ENCODE measurements at regions of chr11 and their contacts with region 1.

Region 1: GRCh38 chr11:17207317-17208258 is at the start of gene PIK3C2A:
- DNase-seq: peak; percentile 92 to 99 (median 97)
- H3K4me3 ChIP-seq: peak within 1 kb of the TSS; percentile 71 to 100 (median 94)
- H3K27ac ChIP-seq: peak within 1 kb of the TSS; percentile 63 to 99 (median 93)
- H3K27me3 ChIP-seq: no peaks in the 10 kb centered on the region
- CTCF ChIP-seq: peak in 6 of 56 donors; percentile 3 to 18 (median 9)
- total RNA-seq, gene PIK3C2A: 48.9 to 110 (median 68.0) TPM

Region 2: GRCh38 chr11:16883174-16883573 is 324.4 kb before region 1 on chr11:
- intact Hi-C with region 1: no loop called
- DNase-seq: peak in 1 of 10 donors; percentile 31
- H3K4me3 ChIP-seq: no peak overlapping the region
- H3K27ac ChIP-seq: no peak overlapping the region
- H3K27me3 ChIP-seq: peaks cover 0 to 6% (median 0%) of the 10 kb centered on the region in 45 donors
- CTCF ChIP-seq: peak in 36 of 56 donors; percentile 17 to 67 (median 29)

Region 3: DNA sequence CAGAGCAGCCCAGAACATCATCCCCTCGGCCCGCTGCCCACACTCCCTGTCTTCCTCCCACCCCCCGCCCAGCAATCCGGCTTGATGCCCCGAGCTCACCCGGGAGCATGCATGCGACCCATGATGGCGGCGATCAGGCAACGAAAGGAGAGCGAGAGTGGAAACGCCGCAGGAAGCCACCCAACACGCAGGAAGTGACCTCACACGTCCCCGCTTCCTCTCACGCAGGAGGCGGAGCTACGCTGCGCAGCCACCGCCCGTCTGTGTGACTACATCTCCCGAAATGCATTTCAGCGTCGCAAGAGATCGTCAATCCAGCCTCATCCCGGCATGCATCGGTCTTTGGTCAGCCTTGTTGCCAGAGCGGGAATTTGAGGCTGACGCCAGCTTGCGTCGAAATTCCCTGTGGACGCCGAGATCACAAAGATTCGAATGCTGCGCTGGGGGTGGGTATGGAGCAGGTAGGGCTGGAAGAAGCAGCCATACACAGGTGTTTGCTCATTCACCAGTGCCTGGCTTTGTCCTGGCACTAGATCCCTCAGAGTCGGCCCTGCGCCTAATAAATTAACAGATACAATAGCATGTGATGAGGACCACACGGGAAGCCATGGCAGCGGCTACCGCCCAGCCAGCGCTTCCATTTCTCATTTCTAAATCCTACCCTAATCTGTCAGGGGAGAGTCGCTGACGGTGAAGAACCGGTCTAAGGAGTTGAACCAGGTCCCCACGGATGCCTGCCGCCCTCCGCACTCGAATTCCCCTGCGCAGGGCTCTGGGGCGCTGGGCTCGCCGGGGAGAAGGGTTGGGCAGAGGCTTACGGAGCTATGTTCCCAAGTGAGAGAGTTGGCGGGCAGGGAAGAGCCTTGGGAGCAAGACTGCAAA is 129.8 kb before region 1 on chr11 and contains the start of gene RPS13:
- intact Hi-C with region 1: loop called (anchors 1 to 5 kb)
- DNase-seq: peak; percentile 98 to 99 (median 99)
- H3K4me3 ChIP-seq: peak within 1 kb of the TSS; percentile 58 to 100 (median 96)
- H3K27ac ChIP-seq: peak within 1 kb of the TSS; percentile 42 to 96 (median 90)
- H3K27me3 ChIP-seq: no peaks in the 10 kb centered on the region
- CTCF ChIP-seq: peak in 27 of 56 donors; percentile 3 to 55 (median 23)
- total RNA-seq, gene RPS13: 204 to 383 (median 281) TPM

Region 4: DNA sequence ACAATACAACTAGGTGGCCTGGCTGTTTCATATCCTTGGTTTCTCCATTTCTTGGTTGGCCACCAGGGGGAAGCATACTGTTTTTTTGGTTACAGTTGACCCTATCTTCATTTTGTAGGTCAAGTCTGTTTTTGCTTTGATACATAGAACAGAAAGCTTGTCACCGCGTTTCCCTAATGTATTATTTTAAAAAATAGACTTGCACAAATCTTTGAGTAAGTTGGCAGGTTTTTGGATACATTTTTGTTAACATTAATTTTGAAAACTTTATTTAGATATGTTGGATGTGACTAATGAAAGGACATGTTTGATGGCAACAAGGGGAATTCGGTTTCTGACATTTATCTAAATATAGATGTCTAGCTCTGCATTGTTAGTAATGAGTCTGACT is 147.0 kb after region 1 on chr11:
- intact Hi-C with region 1: loop called in 1 of 2 experiments (anchors 10 kb)
- DNase-seq: peak in 4 of 10 donors; percentile 52 to 80 (median 66)
- H3K4me3 ChIP-seq: peak overlapping the region in 52 of 59 donors; percentile 1 to 85 (median 74)
- H3K27ac ChIP-seq: peak overlapping the region in 16 of 59 donors; percentile 1 to 91 (median 66)
- H3K27me3 ChIP-seq: no peaks in the 10 kb centered on the region
- CTCF ChIP-seq: peak; percentile 48 to 81 (median 71)

Region 5: DNA sequence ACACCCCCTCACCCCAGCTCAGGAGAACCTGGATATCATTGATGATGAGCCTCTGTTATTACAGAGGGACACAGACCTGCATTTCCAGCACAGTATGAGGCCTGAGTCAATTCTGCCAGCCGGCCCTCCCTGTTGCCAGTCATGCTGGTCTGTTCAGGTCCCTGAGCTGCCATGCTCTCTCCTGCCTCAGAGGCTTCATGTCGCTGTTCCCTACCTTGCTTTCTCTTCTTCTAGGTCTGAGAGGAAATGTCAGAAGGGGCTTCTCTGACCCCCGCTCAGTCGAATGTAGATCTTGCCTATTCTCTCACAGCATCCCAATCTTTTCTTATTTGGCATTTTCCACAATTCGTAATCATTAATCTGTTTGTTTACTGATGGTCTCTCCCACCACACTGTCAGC is 290.9 kb after region 1 on chr11:
- intact Hi-C with region 1: no loop called
- DNase-seq: peak in 1 of 10 donors; percentile 71
- H3K4me3 ChIP-seq: no peak overlapping the region
- H3K27ac ChIP-seq: peak overlapping the region in 1 of 59 donors; percentile 21
- H3K27me3 ChIP-seq: no peaks in the 10 kb centered on the region
- CTCF ChIP-seq: no peak

Measured in dorsolateral prefrontal cortex (tissue), 120 donors.